Activated CD4-positive, alpha-beta memory T cell treated with anti-CD3 and anti-CD28 coated beads for 36 hours (primary cell): ENCODE measurements at regions of chr4 and their contacts with region 1.

Region 1: DNA sequence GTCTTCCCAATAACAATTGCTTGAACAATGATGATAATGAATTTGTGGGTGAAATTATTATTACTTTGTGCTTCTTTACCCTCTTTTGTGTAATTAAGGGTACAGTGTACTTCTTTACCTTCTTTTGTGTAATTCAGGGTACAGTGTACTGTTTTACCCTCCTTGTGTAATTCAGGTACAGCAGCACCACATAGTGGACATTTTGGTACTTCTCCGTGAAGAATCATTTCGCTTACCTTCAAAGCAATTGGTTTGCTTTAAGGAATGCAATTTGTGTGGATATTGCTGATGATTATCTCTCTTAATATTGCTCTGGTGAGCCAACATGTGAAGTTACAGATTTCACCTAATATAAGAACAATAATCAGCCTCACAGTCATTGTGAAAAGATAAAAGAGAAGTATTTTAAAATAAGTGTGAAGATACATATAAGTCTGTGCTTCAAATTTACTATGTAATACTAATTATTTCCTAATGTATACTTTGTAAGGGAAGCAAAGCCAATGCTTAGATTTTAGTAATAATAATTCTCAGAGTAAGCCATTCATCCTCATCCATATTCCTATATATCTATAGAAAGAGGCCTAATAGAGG is 27.2 kb upstream of the SEC24B start:
- DNase-seq: no peak
- H3K4me3 Mint-ChIP-seq: no peak overlapping the region
- H3K27ac Mint-ChIP-seq: no peak overlapping the region
- H3K4me1 Mint-ChIP-seq: no peaks in the 10 kb centered on the region
- H3K27me3 Mint-ChIP-seq: no peaks in the 10 kb centered on the region

Region 2: GRCh38 chr4:108683479-108683878 is 723.0 kb before region 1 on chr4:
- CTCF ChIA-PET with region 1: interaction called, 4 read pairs
- POLR2A ChIA-PET with region 1: no interaction called
- intact Hi-C with region 1: loop called (anchors 1 kb)
- DNase-seq: no peak
- H3K4me3 Mint-ChIP-seq: no peak overlapping the region
- H3K27ac Mint-ChIP-seq: no peak overlapping the region
- H3K4me1 Mint-ChIP-seq: no peaks in the 10 kb centered on the region
- H3K27me3 Mint-ChIP-seq: no peaks in the 10 kb centered on the region

Region 3: DNA sequence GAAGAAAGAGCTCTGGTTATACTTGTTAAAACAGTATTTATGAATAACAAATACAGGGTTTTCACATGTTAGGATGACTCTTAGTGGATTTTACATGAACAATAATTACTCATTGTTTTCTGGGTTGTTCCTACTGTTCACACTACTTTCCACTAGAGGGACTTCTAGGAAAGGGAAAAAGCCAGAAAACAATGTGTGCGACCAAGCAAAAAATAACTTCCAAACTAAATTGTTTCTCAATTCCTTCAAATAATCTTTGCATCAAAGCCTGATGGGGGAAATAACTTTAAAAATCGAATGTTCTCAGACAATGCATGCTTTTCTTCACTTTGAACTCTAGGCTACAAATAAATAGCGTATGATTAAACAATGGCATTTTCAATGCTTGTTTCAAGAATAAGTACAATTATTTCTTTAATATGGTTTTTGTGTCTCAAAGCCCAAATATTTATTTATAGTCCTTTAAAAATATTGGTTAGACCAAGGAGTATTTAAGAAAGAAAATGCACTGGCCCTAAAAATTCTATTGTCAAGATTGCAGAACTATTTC is 571.5 kb before region 1 on chr4:
- CTCF ChIA-PET with region 1: no interaction called
- POLR2A ChIA-PET with region 1: no interaction called
- intact Hi-C with region 1: loop called (anchors 2 kb)
- DNase-seq: no peak
- H3K4me3 Mint-ChIP-seq: no peak overlapping the region
- H3K27ac Mint-ChIP-seq: no peak overlapping the region
- H3K4me1 Mint-ChIP-seq: no peaks in the 10 kb centered on the region
- H3K27me3 Mint-ChIP-seq: peaks cover 2% of the 10 kb centered on the region

Region 4: DNA sequence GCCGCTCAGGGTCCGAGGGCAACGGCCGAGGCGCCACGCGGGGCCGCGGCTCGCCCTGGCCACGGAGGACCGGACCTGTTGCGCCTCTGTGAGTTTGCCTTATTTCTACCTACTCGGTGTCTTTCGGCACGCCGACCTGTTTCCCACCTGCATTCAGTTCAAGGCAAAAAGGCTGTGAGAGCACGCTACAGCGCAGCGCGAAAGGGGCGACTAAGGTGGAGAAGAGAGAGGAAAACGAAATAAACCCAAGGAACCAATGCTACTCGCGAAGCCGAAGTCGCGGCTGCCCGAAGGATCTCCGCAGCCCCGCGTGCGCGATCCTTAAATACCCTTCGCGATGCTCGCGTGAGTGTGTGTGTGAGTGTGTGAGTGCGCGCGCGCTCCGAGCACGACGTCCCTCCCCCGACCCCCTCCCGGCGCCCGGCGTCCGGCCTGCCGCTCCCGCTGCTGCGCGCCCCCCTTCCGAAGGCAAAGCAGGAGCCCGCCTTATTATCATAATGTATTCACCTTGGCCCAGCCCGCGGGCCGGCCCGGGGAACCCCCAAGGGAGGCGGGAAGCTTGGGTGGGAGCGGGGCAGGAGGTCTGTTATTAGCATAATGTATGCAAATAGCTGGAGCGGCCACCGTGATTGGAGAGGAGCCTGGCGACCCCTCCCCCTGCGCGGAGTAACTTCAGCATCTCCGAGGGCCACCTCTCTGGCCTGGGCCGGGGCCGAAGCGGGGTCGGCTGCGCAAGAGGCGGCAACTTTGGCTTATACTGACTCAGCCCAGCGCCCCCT is 103.9 kb before region 1 on chr4 and contains the start of gene COL25A1:
- CTCF ChIA-PET with region 1: no interaction called
- POLR2A ChIA-PET with region 1: no interaction called
- intact Hi-C with region 1: loop called (anchors 10 kb)
- DNase-seq: peak; percentile 48
- H3K4me3 Mint-ChIP-seq: peak within 1 kb of the TSS; percentile 62
- H3K27ac Mint-ChIP-seq: no peak within 1 kb of the TSS
- H3K4me1 Mint-ChIP-seq: peaks cover 11% of the 10 kb centered on the region
- H3K27me3 Mint-ChIP-seq: peaks cover 47% of the 10 kb centered on the region
- total RNA-seq, gene COL25A1: not detected

Region 5: GRCh38 chr4:109701566-109702405 is 295.4 kb after region 1 on chr4:
- CTCF ChIA-PET with region 1: no interaction called
- POLR2A ChIA-PET with region 1: no interaction called
- intact Hi-C with region 1: no loop called
- DNase-seq: no peak
- H3K4me3 Mint-ChIP-seq: peak overlapping the region; percentile 90
- H3K27ac Mint-ChIP-seq: peak overlapping the region; percentile 82
- H3K4me1 Mint-ChIP-seq: peaks cover 34% of the 10 kb centered on the region
- H3K27me3 Mint-ChIP-seq: no peaks in the 10 kb centered on the region